Left cardiac atrium (tissue), 4 donors: ENCODE measurements at regions of chr16 and their contacts with region 1.

Region 1: GRCh38 chr16:8797364-8798173 is at the starts of genes PMM2 and TMEM186:
- DNase-seq: peak; percentile 98
- ATAC-seq: peak; percentile 99 to 100
- total RNA-seq, gene PMM2: 21.3 to 38.3 TPM
- total RNA-seq, gene TMEM186: 10.3 to 12.1 TPM

Region 2: GRCh38 chr16:8158051-8158450 is 639.5 kb before region 1 on chr16:
- intact Hi-C with region 1: no loop called
- DNase-seq: no peak
- ATAC-seq: no peak

Region 3: GRCh38 chr16:8567750-8568617 is 229.6 kb before region 1 on chr16:
- intact Hi-C with region 1: loop called (anchors 2 to 10 kb)
- DNase-seq: peak; percentile 70
- ATAC-seq: peak; percentile 88 to 89

Region 4: GRCh38 chr16:8572919-8573724 is 224.4 kb before region 1 on chr16:
- intact Hi-C with region 1: loop called in 1 of 2 experiments (anchors 10 kb)
- DNase-seq: no peak
- ATAC-seq: no peak

Region 5: GRCh38 chr16:8660841-8661301 is 136.7 kb before region 1 on chr16:
- intact Hi-C with region 1: loop called (anchors 2 to 5 kb)
- DNase-seq: peak; percentile 66
- ATAC-seq: peak; percentile 82 to 87

Region 6: GRCh38 chr16:8885674-8886592 is 88.4 kb after region 1 on chr16:
- intact Hi-C with region 1: loop called in 1 of 2 experiments (anchors 10 kb)
- DNase-seq: no peak
- ATAC-seq: peak; percentile 20 to 44